Ovary (tissue), 10 donors: ENCODE measurements at regions of chr21 and their contacts with region 1.

Region 1: DNA sequence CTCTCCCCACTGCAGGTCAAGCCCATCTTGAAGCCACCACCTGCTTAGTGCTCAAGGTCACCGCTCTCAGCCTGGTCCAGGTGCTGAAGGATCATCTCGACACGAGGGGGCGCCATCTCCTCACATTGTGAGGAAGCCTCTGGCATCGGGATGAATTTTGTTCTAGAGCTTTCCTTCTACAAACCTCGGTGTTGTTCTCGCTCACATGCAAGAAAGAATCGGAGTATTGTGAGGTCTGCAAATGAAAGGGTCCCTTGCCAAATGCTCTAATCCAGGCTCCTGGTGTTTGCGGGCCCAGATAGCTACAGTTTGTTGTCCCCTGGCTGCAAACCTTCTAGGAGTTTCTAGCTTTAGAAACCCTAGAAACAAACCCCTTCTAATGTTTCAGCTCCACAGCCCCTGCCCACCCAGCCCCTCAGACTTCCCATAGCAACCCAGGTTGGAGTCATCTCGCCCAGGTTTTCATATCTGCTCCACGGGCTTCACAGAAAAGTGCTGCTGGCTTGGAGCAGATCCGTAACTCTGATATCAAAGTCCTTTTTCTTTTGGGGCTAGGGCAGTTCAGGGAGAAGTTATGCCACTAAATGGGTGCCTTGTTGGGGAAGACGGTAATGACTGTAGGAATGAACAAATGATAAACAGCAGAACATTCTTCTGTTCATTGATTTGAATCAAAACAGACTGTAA is 8.6 kb upstream of the ATP5PO start:
- DNase-seq: peak; percentile 84 to 94 (median 91)
- H3K4me3 ChIP-seq: no peak overlapping the region
- H3K27ac ChIP-seq: no peak overlapping the region
- H3K4me1 ChIP-seq: peaks cover 2% of the 10 kb centered on the region
- H3K27me3 ChIP-seq: no peaks in the 10 kb centered on the region
- CTCF ChIP-seq: peak; percentile 82 to 89 (median 84)
- EP300 ChIP-seq: no peak
- POLR2A ChIP-seq: no peak

Region 2: DNA sequence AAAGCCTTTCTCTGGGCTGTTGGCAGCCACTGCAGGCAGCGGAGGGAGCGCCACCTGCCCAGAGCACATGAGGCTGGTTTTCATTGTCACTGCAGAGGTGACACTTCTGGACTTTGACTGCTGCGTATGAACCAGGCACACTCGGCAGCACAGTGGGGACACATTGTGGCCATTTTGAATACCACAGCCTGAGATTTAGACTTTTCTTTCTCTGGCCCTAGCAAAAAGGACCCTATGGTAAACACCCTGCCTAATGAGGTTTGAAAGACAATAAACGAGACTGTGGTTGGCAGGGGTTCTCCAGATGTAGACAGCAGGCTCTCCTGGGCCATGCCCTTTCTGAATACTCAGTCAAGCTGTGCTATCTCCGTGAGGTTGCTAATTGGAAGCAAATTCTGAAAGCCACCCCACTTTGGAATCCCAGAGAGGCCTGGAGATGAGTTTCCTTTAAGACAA is 427.6 kb after region 1 on chr21:
- intact Hi-C with region 1: loop called (anchors 2 to 5 kb)
- DNase-seq: peak in 3 of 5 donors; percentile 19 to 37 (median 23)
- H3K4me3 ChIP-seq: no peak overlapping the region
- H3K27ac ChIP-seq: no peak overlapping the region
- H3K4me1 ChIP-seq: no peaks in the 10 kb centered on the region
- H3K27me3 ChIP-seq: no peaks in the 10 kb centered on the region
- CTCF ChIP-seq: peak; percentile 36 to 69 (median 55)
- EP300 ChIP-seq: no peak
- POLR2A ChIP-seq: no peak

Region 3: GRCh38 chr21:34630536-34631143 is 706.4 kb after region 1 on chr21:
- intact Hi-C with region 1: loop called in 2 of 4 experiments (anchors 5 to 10 kb)
- DNase-seq: no peak
- H3K4me3 ChIP-seq: no peak overlapping the region
- H3K27ac ChIP-seq: no peak overlapping the region
- H3K4me1 ChIP-seq: no peaks in the 10 kb centered on the region
- H3K27me3 ChIP-seq: no peaks in the 10 kb centered on the region
- CTCF ChIP-seq: peak in 2 of 3 donors; percentile 60 to 66
- EP300 ChIP-seq: no peak
- POLR2A ChIP-seq: no peak